GM10248 (cell line): ENCODE measurements at regions of chr13 and their contacts with region 1.

Region 1: DNA sequence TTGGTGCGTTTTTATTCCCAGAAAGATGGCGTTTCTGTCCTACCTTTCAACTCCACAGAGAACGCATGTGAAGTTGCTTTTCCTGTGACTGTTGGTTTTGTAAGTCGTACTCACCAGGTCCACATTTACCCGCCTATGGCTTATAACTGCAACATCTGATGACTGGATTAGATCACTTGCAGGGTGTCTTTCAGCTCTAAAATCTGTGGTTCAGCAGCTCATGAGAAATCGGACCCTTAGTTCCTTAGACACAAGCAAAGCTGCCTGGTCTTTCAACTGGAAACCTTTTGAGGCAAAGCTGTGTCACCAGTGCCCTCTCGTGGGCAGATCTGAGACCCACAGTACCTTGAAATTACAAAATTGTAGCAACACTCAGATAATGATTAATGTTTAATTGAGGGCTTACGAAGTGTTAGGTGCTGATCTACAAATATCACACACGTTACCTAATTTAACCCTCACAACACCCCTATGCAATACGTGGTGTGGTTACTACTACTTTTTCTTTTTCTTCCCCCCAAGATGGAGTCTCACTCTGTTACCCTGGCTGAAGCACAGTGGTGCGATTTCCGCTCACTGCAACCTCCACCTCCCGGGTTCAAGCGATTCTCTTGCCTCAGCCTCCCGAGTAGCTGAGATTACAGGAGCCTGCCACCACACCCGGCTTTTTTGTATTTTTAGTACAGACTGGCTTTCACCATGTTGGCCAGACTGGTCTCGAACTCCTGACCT is 65.4 kb downstream of the RUBCNL start:
- DNase-seq: peak; percentile 74
- CTCF ChIP-seq: peak; percentile 89

Region 2: DNA sequence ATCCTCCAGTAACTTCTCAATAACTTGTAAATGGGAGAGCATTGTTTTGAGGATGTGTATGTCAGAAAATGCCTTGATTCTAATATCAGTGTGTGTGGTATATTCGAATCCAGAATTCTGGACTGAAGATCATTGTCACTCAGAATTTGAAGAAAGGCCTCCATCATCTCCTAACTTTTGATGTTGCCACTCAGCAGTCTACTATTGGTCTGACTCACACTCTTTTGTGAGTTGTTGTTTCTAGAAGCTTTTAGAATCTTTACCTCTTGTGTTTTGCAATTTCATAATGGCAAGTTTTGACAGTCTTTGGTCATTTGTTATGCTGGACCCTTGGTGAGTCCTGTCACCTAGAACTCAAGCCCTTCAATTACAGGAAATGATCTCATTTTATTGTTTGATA is 11.6 kb before region 1 on chr13:
- CTCF ChIA-PET with region 1: interaction called, 14 read pairs
- POLR2A ChIA-PET with region 1: no interaction called
- DNase-seq: no peak
- CTCF ChIP-seq: no peak

Region 3: DNA sequence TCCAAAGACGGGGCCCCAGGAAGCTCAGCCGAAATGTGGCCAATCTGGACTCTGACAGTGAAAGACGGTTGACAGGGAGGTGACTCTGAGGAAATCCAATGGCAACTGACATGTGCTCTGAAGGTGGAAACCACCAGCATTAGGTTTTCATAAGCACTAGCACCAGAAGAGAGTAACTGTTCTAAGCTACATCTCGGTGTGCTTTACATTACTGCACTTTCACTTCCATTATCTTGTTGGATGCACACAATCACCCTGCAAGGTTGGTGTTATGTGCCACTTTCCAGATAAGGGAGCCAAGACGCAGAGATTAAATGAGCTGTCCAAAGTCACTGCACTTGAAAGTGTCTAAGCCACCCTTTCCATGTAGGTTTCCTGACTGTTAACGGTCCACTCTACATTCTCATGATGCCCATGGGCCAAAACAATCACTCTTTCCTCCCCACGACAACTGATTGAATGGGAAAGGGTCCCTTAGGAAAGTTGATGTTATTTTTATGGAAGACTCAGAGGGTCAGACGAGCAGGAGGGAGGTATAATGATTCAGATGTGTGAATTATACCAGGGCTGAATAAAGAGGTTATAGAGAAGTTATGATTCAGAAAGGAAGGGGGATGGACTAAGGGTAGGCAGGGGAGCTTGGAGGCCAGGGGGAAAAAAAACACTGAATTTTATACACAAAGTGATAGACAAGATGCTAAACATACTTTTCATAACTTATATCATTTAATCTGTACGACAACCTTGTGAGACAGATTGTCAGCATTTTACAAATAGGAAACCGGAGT is 12.6 kb after region 1 on chr13:
- CTCF ChIA-PET with region 1: interaction called, 11 read pairs
- POLR2A ChIA-PET with region 1: interaction called, 4 read pairs
- DNase-seq: peak; percentile 27
- CTCF ChIP-seq: no peak